ENCODE measurements at regions of chr2 and their contacts with region 1.

Region 1: GRCh38 chr2:27322766-27323595 is at the start of gene MPV17:
- DNase-seq: peak; percentile 82 to 89 (median 86)
- H3K4me3 ChIP-seq: peak within 1 kb of the TSS; percentile 85 to 99 (median 93)
- H3K27ac ChIP-seq: peak within 1 kb of the TSS; percentile 98 to 99
- H3K4me1 ChIP-seq: peaks cover 9 to 22% (median 15%) of the 10 kb centered on the region in 4 experiments
- H3K27me3 ChIP-seq: no peaks in the 10 kb centered on the region

Region 2: DNA sequence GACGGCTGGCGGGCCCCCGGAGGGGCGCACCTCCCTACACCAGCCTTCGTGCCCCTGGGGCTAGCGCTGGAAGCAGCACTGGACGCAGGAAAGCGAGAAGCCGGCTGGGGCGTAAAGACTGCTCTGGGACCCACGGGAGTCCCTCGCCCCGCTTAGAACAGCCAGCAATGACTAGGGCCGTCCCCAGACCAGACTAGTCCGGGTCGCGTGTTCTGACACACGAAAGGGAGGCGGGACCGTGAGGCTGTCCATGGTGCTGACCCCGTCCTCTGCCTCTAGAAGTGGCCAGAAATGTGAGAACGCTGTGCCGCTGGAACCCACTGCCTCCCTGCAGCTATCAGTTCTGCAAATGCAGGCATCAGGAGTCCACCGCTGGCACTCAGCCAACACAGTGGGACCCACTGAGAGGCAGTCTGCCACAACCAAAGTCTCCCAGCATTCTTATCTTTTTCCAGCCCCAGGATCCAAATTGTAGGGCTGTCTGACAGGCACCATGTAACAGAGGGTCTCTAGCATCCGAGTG is 14.6 kb before region 1 on chr2 and contains the start of gene UCN:
- CTCF ChIA-PET with region 1: interaction called, 28 read pairs
- POLR2A ChIA-PET with region 1: no interaction called
- DNase-seq: peak in 1 of 3 donors; percentile 7
- H3K4me3 ChIP-seq: peak within 1 kb of the TSS in 3 of 7 experiments; percentile 52 to 68 (median 56)
- H3K27ac ChIP-seq: no peak within 1 kb of the TSS
- H3K4me1 ChIP-seq: peaks cover 0 to 23% (median 15%) of the 10 kb centered on the region in 4 experiments
- H3K27me3 ChIP-seq: peaks cover 0 to 42% (median 19%) of the 10 kb centered on the region in 5 experiments